ENCODE measurements at regions of chr11 and their contacts with region 1.

Region 1: DNA sequence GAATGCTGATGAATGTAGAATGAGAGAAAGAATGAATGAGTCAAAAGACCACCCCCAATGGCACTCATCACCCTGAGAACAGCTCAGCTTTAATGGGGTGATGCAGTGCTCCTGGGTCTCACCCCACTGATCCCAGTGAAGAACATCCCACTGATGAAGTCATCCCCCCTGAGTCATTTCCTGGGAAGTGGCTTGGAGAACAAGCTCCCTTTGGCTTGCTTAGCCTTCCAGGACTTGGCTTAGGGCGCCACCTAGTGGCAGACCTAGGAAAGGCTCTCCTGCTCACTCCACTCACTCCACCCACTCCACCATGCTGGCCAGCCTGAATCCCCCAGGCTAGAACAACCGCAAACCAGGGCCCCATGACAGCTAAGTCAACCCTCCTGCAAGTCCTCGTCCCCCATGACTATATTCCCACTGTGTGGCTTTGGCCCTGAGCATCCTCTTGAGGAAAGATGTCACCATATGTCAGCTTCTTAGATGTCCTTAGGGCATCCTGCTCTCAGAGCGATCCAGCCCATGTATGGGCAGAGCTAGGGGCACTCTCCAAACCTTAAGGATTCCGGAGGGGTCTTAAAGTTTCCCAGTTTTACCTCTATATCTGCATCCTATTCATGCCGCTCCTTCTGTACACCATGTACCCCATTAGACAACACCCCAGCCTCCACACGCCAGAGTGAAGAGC is 17.8 kb upstream of the TMPRSS13 start:
- DNase-seq: peak; percentile 60 to 93 (median 83)
- ATAC-seq: peak; percentile 13
- H3K4me3 ChIP-seq: no peak overlapping the region
- H3K4me3 Mint-ChIP-seq: peak overlapping the region; percentile 37
- H3K27ac ChIP-seq: no peak overlapping the region
- H3K27ac Mint-ChIP-seq: peak overlapping the region; percentile 66
- H3K4me1 ChIP-seq: peaks cover 51% of the 10 kb centered on the region
- H3K4me1 Mint-ChIP-seq: peaks cover 69% of the 10 kb centered on the region
- H3K27me3 ChIP-seq: no peaks in the 10 kb centered on the region
- H3K27me3 Mint-ChIP-seq: no peaks in the 10 kb centered on the region
- CTCF ChIP-seq: peak; percentile 89

Region 2: DNA sequence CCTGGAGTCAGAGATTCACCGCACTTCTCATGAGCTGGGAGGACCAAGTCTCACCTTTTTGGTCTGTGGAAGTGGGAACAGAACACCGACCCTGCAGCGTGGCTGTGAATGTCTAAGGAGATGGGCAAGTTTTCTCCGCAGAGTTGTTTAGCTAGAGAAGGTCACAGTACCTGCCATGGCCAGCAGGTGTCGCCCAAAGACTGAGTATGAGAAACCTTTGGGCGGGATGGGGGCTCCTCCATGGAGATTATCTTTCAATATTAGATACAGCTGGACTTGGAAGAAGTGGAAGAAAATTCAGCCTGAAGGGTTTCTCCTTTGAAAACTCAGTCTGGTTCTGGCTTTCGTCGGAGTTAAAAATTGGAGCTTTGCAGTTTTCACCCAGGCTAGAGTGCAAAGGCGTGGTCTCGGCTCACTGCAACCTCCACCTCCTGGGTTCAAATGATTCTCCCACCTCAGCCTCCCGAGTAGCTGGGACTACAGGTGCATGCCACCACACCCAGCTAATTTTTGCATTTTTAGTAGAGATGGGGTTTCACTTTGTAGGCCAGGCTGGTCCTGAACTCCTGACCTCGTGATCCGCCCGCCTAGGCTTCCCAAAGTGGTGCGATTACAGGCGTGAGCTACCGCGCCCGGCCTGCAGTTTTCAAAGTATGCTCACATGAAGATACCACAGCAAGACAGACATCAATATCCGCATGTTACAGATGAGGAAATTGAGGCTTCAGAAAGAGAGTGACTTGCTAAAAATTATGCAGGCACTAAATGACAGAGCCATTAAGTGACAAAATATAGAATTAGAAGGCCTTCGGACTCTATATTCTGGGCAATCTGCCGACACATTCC is 139.3 kb before region 1 on chr11:
- CTCF ChIA-PET with region 1: interaction called, 191 read pairs
- POLR2A ChIA-PET with region 1: interaction called, 4 read pairs
- intact Hi-C with region 1: loop called (anchors 1 to 2 kb)
- DNase-seq: peak; percentile 58 to 85 (median 78)
- ATAC-seq: peak; percentile 89
- H3K4me3 ChIP-seq: no peak overlapping the region
- H3K4me3 Mint-ChIP-seq: no peak overlapping the region
- H3K27ac ChIP-seq: no peak overlapping the region
- H3K27ac Mint-ChIP-seq: no peak overlapping the region
- H3K4me1 ChIP-seq: peaks cover 4% of the 10 kb centered on the region
- H3K4me1 Mint-ChIP-seq: peaks cover 7% of the 10 kb centered on the region
- H3K27me3 ChIP-seq: no peaks in the 10 kb centered on the region
- H3K27me3 Mint-ChIP-seq: no peaks in the 10 kb centered on the region
- CTCF ChIP-seq: peak; percentile 94

Region 3: GRCh38 chr11:117851106-117851505 is 95.9 kb before region 1 on chr11:
- CTCF ChIA-PET with region 1: interaction called, 217 read pairs
- POLR2A ChIA-PET with region 1: interaction called, 3 read pairs
- intact Hi-C with region 1: no loop called
- DNase-seq: peak in 1 of 9 experiments; percentile 5
- ATAC-seq: no peak
- H3K4me3 ChIP-seq: no peak overlapping the region
- H3K4me3 Mint-ChIP-seq: no peak overlapping the region
- H3K27ac ChIP-seq: no peak overlapping the region
- H3K27ac Mint-ChIP-seq: no peak overlapping the region
- H3K4me1 ChIP-seq: no peaks in the 10 kb centered on the region
- H3K4me1 Mint-ChIP-seq: peaks cover 6% of the 10 kb centered on the region
- H3K27me3 ChIP-seq: peaks cover 0 to 2% of the 10 kb centered on the region in 2 experiments
- H3K27me3 Mint-ChIP-seq: no peaks in the 10 kb centered on the region
- CTCF ChIP-seq: no peak

Region 4: DNA sequence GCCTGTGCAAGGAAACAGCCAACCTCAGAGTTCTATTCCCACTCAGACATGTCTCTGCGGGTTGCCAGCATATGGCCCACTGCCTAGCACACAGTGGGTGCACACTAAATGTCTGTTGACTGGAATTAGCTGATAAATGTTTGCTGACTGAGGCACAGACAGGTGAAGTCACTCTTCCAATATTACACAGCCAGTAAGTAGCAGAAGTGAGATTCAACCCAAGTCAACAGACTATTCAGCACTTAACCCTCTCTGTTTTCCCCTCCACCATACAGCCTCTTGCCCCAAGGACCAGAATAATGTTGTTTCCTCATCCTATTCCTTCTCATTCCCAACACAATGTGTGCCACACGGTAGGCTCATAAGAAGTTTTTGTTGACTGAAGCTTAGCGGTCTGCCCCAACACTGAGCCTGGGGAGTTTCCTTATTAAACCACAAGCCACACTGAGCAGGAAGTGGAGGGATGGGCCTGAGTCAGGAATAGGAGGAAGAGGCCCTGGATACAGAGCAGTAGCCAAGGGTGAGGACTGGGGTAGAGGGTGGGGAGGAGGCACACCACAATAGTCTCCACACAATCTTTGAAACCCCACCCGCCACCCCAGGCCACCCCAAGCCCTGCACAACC is 23.5 kb after region 1 on chr11:
- CTCF ChIA-PET with region 1: interaction called, 12 read pairs
- POLR2A ChIA-PET with region 1: interaction called, 87 read pairs
- intact Hi-C with region 1: loop called in 1 of 2 experiments (anchors 2 kb)
- DNase-seq: peak in 2 of 9 experiments; percentile 65 to 77
- ATAC-seq: peak; percentile 53
- H3K4me3 ChIP-seq: peak overlapping the region in 1 of 2 experiments; percentile 28
- H3K4me3 Mint-ChIP-seq: peak overlapping the region; percentile 35
- H3K27ac ChIP-seq: peak overlapping the region in 1 of 2 experiments; percentile 57
- H3K27ac Mint-ChIP-seq: peak overlapping the region; percentile 67
- H3K4me1 ChIP-seq: peaks cover 52% of the 10 kb centered on the region
- H3K4me1 Mint-ChIP-seq: peaks cover 61% of the 10 kb centered on the region
- H3K27me3 ChIP-seq: no peaks in the 10 kb centered on the region
- H3K27me3 Mint-ChIP-seq: no peaks in the 10 kb centered on the region
- CTCF ChIP-seq: no peak

Region 5: DNA sequence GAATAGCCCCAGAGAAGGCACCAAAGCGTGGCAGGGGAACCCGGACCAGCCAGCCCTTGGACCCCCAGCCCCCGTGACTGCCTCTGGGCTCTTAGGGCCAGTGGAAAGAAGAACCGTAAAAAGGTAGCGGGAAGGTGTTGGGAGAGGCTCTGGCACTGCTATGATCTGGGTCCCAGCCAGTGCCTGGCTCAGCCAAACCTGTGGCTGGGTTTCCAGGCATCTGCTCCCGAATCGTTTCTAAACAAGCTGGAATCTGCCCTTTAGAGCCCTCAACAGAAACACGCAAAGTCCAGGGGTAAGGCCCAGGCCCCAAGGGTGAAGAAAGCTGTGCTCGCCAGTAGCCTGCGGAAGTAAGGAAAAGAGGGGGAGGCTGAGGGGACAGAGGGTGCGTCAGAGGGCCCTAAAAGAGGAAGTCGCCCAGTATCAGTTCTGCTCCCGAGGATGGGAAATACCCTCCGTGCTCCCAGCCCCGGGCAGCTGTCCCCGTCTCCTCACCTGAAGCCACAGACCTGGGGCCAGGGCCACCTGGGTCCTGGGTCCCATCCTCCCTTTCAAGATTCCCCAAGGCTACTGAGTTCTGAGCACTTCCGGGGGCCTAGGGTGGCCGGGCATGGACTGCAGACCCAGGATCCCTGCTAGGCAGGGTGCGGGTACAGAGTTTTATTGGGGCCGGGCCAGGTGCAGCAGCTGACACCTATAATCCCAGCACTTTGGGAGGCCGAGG is 63.9 kb after region 1 on chr11:
- CTCF ChIA-PET with region 1: interaction called, 403 read pairs
- POLR2A ChIA-PET with region 1: interaction called, 438 read pairs
- intact Hi-C with region 1: no loop called
- DNase-seq: peak in 2 of 9 experiments; percentile 32 to 63
- ATAC-seq: no peak
- H3K4me3 ChIP-seq: no peak overlapping the region
- H3K4me3 Mint-ChIP-seq: no peak overlapping the region
- H3K27ac ChIP-seq: peak overlapping the region in 1 of 2 experiments; percentile 84
- H3K27ac Mint-ChIP-seq: peak overlapping the region; percentile 15
- H3K4me1 ChIP-seq: peaks cover 100% of the 10 kb centered on the region
- H3K4me1 Mint-ChIP-seq: peaks cover 98% of the 10 kb centered on the region
- H3K27me3 ChIP-seq: no peaks in the 10 kb centered on the region
- H3K27me3 Mint-ChIP-seq: no peaks in the 10 kb centered on the region
- CTCF ChIP-seq: no peak

Region 6: GRCh38 chr11:118051611-118052461 is 104.9 kb after region 1 on chr11:
- CTCF ChIA-PET with region 1: interaction called, 357 read pairs
- POLR2A ChIA-PET with region 1: interaction called, 100 read pairs
- intact Hi-C with region 1: loop called (anchors 1 kb)
- DNase-seq: peak; percentile 55 to 93 (median 77)
- ATAC-seq: peak; percentile 92
- H3K4me3 ChIP-seq: peak overlapping the region in 1 of 2 experiments; percentile 20
- H3K4me3 Mint-ChIP-seq: peak overlapping the region; percentile 67
- H3K27ac ChIP-seq: peak overlapping the region; percentile 49 to 69
- H3K27ac Mint-ChIP-seq: peak overlapping the region; percentile 98
- H3K4me1 ChIP-seq: peaks cover 59% of the 10 kb centered on the region
- H3K4me1 Mint-ChIP-seq: peaks cover 58% of the 10 kb centered on the region
- H3K27me3 ChIP-seq: no peaks in the 10 kb centered on the region
- H3K27me3 Mint-ChIP-seq: no peaks in the 10 kb centered on the region
- CTCF ChIP-seq: no peak